CD4-positive, alpha-beta memory T cell (primary cell): ENCODE measurements at regions of chr1 and their contacts with region 1.

Region 1: DNA sequence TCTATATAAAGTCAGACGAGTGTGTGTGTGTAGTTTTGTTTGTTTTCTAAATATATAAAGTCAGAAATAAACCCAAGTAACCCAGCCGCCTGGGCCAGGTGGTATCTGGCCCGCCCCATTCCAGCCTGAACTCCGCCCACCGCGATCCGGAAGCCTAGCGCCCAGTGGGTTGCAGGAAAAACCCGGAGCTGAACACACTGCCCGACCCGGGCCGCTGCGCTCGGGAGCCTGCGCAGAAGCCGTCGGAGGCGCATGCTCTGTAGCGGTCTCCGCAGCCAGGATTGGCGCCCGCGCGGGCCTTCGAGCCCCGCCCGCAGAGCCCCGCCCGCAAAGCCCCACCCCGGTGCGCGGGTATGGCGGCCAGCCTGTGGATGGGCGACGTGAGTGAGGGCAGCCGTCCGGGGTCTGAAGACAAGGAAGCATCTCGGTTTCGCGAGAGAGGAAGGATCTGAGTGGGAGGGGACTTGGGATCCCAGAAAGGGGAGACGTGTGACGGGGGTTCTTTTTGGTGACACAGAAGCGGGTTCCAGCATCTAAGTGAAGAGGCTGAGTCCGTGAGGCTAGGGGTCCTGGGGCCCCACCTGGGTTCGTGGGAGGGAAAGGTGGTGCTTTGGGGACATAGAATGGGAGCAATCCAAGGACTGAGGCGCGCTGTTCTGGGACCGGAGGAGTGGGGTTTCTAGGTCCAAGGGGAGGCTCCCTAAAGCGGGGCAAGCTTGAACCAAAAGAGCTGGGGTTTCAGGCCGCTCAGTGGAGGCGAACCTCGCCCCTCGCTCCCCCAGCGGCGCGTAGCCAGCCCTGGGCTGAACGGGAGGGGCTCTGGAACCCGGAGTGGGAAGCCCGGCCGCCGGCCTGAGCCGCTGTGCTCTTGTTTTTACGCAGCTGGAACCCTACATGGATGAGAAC is at the start of gene TRNAU1AP:
- DNase-seq: peak; percentile 96 to 98 (median 97)
- H3K4me3 ChIP-seq: peak within 1 kb of the TSS; percentile 89 to 96
- H3K4me3 Mint-ChIP-seq: peak within 1 kb of the TSS; percentile 98 to 100 (median 99)
- H3K27ac ChIP-seq: peak within 1 kb of the TSS; percentile 80
- H3K27ac Mint-ChIP-seq: peak within 1 kb of the TSS; percentile 96 to 99 (median 98)
- H3K4me1 ChIP-seq: peaks cover 21% of the 10 kb centered on the region
- H3K4me1 Mint-ChIP-seq: peaks cover 11 to 35% (median 19%) of the 10 kb centered on the region in 4 donors
- H3K27me3 ChIP-seq: no peaks in the 10 kb centered on the region
- H3K27me3 Mint-ChIP-seq: no peaks in the 10 kb centered on the region
- total RNA-seq, gene TRNAU1AP: 46.3 to 46.7 TPM

Region 2: DNA sequence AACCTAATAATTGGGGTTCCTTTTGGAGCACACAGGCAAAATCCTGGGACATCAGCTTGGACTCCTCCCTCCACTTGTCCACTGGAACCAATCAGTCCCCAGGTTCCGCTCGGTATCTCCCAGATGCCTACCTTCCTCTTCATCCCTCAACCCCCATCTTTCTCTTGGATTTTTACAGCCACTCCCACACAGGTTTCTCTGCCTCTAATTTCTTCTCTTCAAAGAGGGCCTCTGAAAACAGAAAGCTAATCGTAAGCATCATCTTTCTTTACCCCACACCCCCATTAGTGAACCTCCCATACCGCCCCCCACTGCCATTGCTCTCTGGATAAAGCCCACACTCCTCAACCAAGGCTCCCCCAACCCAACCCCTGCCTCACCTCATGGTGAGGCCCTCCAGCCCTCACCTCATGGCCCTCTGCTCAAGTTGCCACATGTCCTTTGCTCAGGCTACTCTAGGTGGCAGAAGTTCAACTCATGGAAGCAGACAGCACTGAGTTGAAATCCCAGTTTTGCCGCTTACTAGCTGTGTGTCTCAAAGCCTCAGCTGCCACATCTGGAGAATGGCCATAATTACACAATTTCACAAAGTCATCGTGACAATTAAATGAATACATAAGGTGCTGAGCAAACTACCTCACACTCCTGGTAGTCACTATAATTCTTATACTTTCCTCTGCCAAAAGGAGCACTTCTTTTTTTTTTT is 1044.9 kb before region 1 on chr1:
- CTCF ChIA-PET with region 1: no interaction called
- POLR2A ChIA-PET with region 1: no interaction called
- intact Hi-C with region 1: no loop called
- DNase-seq: no peak
- H3K4me3 ChIP-seq: no peak overlapping the region
- H3K4me3 Mint-ChIP-seq: no peak overlapping the region
- H3K27ac ChIP-seq: no peak overlapping the region
- H3K27ac Mint-ChIP-seq: peak overlapping the region in 4 of 7 donors; percentile 65 to 91 (median 82)
- H3K4me1 ChIP-seq: no peaks in the 10 kb centered on the region
- H3K4me1 Mint-ChIP-seq: peaks cover 0 to 5% (median 0%) of the 10 kb centered on the region in 4 donors
- H3K27me3 ChIP-seq: no peaks in the 10 kb centered on the region
- H3K27me3 Mint-ChIP-seq: no peaks in the 10 kb centered on the region

Region 3: DNA sequence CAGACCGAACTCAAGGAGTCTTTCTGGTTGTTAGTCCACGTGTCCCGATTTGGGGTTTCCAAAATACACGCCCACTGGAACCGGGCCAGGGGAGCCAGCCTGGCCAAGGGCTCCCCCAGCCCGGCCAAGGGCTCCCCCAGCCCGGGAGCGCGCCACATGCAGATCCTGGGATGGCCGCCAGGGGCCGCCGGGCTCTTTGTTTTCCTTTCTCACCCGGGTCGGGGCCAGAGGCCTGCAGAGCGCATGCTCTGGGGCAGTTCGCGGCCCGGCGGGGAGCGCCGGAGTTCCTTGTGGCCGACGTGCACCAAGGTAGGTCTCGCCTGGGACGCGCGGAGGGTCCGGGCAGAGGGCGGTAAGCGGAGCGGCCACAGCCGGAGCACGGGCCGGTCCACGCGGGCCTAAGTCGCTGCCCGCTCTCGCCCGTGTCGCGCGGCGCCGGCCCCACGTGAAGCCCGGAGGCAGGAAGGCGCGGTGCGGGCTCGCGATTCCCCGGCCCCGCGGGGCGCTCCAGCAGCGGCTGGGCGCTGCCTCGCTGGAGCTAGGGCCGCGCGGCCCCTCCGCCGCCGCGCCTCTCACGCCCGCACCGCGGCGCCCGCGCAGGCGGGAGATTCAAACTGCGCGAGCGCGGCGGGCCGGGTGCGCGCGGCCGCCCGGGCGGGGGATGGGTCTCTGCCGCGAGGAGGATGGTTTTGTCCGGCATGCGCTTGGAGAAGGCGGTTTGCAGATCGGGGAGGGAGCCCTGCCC is 34.8 kb before region 1 on chr1:
- CTCF ChIA-PET with region 1: no interaction called
- POLR2A ChIA-PET with region 1: interaction called, 22 read pairs
- intact Hi-C with region 1: loop called (anchors 1 kb)
- DNase-seq: peak; percentile 84 to 87 (median 86)
- H3K4me3 ChIP-seq: peak overlapping the region; percentile 33 to 65
- H3K4me3 Mint-ChIP-seq: peak overlapping the region; percentile 85 to 92 (median 90)
- H3K27ac ChIP-seq: peak overlapping the region; percentile 56
- H3K27ac Mint-ChIP-seq: peak overlapping the region; percentile 67 to 94 (median 85)
- H3K4me1 ChIP-seq: peaks cover 27% of the 10 kb centered on the region
- H3K4me1 Mint-ChIP-seq: peaks cover 15 to 32% (median 21%) of the 10 kb centered on the region in 4 donors
- H3K27me3 ChIP-seq: no peaks in the 10 kb centered on the region
- H3K27me3 Mint-ChIP-seq: no peaks in the 10 kb centered on the region

Region 4: DNA sequence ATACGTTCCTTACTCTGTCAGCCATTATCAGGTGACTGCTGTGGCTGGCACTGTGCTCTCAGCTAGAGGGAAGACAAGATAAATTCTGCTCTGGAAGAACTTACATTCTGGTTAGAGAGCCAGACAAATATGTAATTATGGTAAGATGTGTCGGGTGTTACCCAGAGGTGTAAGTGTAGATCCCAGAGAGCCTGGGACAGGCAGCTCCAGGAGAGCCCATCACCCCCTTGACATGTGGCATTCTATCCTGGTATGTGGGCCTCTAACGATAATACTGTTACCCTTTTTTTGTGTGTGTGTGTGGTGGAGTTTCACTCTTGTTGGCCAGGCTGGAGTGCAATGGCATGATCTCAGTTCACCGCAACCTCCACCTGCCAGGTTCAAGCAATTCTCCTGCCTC is 18.9 kb after region 1 on chr1:
- CTCF ChIA-PET with region 1: interaction called, 3 read pairs
- POLR2A ChIA-PET with region 1: interaction called, 199 read pairs
- intact Hi-C with region 1: no loop called
- DNase-seq: no peak
- H3K4me3 ChIP-seq: no peak overlapping the region
- H3K4me3 Mint-ChIP-seq: no peak overlapping the region
- H3K27ac ChIP-seq: no peak overlapping the region
- H3K27ac Mint-ChIP-seq: peak overlapping the region in 1 of 7 donors; percentile 18
- H3K4me1 ChIP-seq: no peaks in the 10 kb centered on the region
- H3K4me1 Mint-ChIP-seq: peaks cover 0 to 2% (median 0%) of the 10 kb centered on the region in 4 donors
- H3K27me3 ChIP-seq: no peaks in the 10 kb centered on the region
- H3K27me3 Mint-ChIP-seq: no peaks in the 10 kb centered on the region

Region 5: DNA sequence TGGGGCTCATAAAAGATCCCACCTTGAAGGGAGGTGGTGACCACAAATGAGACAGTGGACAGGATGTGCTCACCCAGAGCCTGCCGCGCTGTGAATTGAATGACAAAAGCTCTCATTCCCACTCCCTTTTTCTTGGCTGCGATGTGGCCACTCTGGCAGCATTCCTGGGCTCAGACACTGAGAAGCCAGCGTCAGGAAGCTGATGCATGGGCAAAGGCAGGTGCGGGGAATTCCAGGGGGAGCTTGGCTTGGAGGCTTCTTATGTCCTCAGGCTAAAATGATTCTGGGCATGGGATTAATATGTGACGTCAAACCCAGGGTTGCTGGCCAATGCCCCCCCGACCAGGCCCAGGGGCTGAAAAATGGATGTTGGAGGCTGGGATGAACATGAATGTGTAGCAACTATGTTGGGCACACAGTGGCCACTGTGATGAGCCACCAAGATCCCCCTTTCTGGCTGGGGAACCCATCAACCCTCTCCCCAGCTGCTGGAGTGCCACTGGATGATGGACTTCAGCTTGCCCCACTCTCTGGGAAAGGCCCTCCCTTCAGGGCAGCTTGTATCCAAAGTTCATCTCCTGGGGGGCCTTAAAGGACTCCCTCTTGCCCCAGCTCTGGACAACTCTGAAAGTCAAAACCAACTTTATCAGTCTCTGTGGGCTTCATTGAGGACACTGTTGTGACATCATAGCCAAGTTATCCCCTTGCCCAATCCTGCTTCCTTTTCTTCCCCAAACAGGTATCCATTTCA is 41.8 kb after region 1 on chr1:
- CTCF ChIA-PET with region 1: no interaction called
- POLR2A ChIA-PET with region 1: no interaction called
- intact Hi-C with region 1: no loop called
- DNase-seq: no peak
- H3K4me3 ChIP-seq: no peak overlapping the region
- H3K4me3 Mint-ChIP-seq: no peak overlapping the region
- H3K27ac ChIP-seq: no peak overlapping the region
- H3K27ac Mint-ChIP-seq: peak overlapping the region in 1 of 7 donors; percentile 50
- H3K4me1 ChIP-seq: peaks cover 4% of the 10 kb centered on the region
- H3K4me1 Mint-ChIP-seq: peaks cover 0 to 13% (median 5%) of the 10 kb centered on the region in 4 donors
- H3K27me3 ChIP-seq: peaks cover 4% of the 10 kb centered on the region
- H3K27me3 Mint-ChIP-seq: peaks cover 3 to 4% of the 10 kb centered on the region in 2 donors

Region 6: GRCh38 chr1:28648474-28649198 is 95.6 kb after region 1 on chr1 and contains the start of gene RNU11:
- CTCF ChIA-PET with region 1: no interaction called
- POLR2A ChIA-PET with region 1: interaction called, 21 read pairs
- intact Hi-C with region 1: loop called (anchors 1 kb)
- DNase-seq: peak; percentile 93 to 95 (median 95)
- H3K4me3 ChIP-seq: peak within 1 kb of the TSS; percentile 55 to 91
- H3K4me3 Mint-ChIP-seq: peak within 1 kb of the TSS; percentile 84 to 94 (median 90)
- H3K27ac ChIP-seq: peak within 1 kb of the TSS; percentile 96
- H3K27ac Mint-ChIP-seq: peak within 1 kb of the TSS; percentile 99 to 100 (median 99)
- H3K4me1 ChIP-seq: peaks cover 31% of the 10 kb centered on the region
- H3K4me1 Mint-ChIP-seq: peaks cover 15 to 36% (median 25%) of the 10 kb centered on the region in 4 donors
- H3K27me3 ChIP-seq: no peaks in the 10 kb centered on the region
- H3K27me3 Mint-ChIP-seq: no peaks in the 10 kb centered on the region
- total RNA-seq, gene RNU11: not detected

Region 7: GRCh38 chr1:28668191-28668955 is 115.4 kb after region 1 on chr1 and contains the start of gene GMEB1:
- CTCF ChIA-PET with region 1: interaction called, 3 read pairs
- POLR2A ChIA-PET with region 1: interaction called, 13 read pairs
- intact Hi-C with region 1: loop called (anchors 1 kb)
- DNase-seq: peak; percentile 79 to 86 (median 84)
- H3K4me3 ChIP-seq: peak within 1 kb of the TSS; percentile 89 to 92
- H3K4me3 Mint-ChIP-seq: peak within 1 kb of the TSS; percentile 92 to 97 (median 93)
- H3K27ac ChIP-seq: peak within 1 kb of the TSS; percentile 88
- H3K27ac Mint-ChIP-seq: peak within 1 kb of the TSS; percentile 98 to 100 (median 98)
- H3K4me1 ChIP-seq: peaks cover 21% of the 10 kb centered on the region
- H3K4me1 Mint-ChIP-seq: peaks cover 13 to 26% (median 18%) of the 10 kb centered on the region in 4 donors
- H3K27me3 ChIP-seq: no peaks in the 10 kb centered on the region
- H3K27me3 Mint-ChIP-seq: no peaks in the 10 kb centered on the region
- total RNA-seq, gene GMEB1: 21.8 to 21.9 TPM